ENCODE measurements at regions of chr2 and their contacts with region 1.

Region 1: GRCh38 chr2:157327621-157328500 is 2.2 kb upstream of the ERMN start:
- DNase-seq: peak; percentile 68
- ATAC-seq: peak; percentile 99
- H3K4me3 ChIP-seq: no peak overlapping the region
- H3K27ac ChIP-seq: no peak overlapping the region
- H3K4me1 ChIP-seq: no peaks in the 10 kb centered on the region
- H3K27me3 ChIP-seq: no peaks in the 10 kb centered on the region
- CTCF ChIP-seq: peak; percentile 88 to 97 (median 96)
- EP300 ChIP-seq: no peak
- POLR2A ChIP-seq: no peak
- RAD21 ChIP-seq: peak; percentile 88

Region 2: DNA sequence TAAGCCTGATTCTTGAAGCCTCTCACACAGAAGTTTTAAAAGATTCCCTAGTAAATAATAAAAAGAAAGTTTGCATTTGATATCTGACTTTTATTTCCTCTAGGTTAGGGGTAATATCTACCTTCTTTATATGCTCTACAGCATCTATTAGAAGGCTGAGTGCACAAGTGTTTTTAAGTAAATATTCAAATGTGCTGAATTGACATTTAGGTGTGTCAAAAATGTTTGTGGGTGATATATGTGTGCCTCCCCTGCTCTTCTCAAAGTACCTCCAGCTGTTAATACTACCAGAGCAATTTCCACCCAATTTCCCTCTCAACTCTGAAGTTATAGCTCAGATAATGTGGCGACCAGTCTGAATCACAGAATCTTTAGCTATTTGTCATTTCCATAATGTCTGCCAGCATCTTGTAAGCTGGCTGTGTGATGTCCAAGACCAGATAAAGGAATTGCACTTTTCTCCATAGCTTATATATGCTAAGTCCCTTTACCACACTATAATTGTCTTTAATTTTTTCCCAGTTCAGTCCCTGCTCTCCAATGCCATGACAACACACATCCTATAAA is 22.2 kb after region 1 on chr2:
- CTCF ChIA-PET with region 1: interaction called, 70 read pairs
- POLR2A ChIA-PET with region 1: no interaction called
- RAD21 ChIA-PET with region 1: interaction called, 5 read pairs
- SMC1A ChIA-PET with region 1: interaction called, 18 read pairs
- in situ Hi-C with region 1: no loop called
- intact Hi-C with region 1: no loop called
- DNase-seq: no peak
- ATAC-seq: no peak
- H3K4me3 ChIP-seq: no peak overlapping the region
- H3K27ac ChIP-seq: no peak overlapping the region
- H3K4me1 ChIP-seq: no peaks in the 10 kb centered on the region
- H3K27me3 ChIP-seq: no peaks in the 10 kb centered on the region
- CTCF ChIP-seq: no peak
- EP300 ChIP-seq: no peak
- POLR2A ChIP-seq: no peak
- RAD21 ChIP-seq: no peak

Region 3: DNA sequence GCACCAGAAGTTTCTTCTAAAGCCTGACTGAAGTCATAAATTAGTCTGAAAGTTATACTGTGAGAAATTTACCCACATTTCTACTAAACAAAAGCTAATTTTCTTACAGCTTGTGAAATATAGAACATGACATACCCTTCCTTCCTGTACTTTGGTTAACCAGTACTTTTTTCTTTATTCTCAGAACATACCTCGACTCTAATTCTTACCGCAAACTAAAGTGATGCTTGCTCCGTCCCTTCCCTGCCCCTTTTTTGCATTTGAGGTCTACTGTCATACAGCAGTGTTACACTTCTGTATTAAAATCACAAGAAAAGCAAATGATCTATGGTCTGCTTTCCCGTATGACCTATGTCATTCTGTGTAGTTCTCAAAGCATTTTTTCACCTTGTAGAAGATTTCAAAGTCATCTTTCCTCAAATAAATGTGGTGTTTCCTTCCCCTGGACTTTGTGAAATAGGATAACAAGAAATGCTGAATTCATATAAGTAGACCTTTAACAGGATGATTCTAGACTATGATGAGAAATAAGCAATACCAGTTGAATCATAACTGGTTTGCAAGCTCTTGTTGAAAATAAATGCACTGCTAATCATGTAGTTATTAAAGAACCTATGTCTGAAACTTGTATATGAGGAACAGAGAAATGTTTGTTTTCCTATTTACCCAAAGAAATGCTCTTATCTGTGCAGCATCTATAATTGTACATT is 85.6 kb after region 1 on chr2:
- CTCF ChIA-PET with region 1: interaction called, 56 read pairs
- POLR2A ChIA-PET with region 1: interaction called, 5 read pairs
- RAD21 ChIA-PET with region 1: interaction called, 26 read pairs
- SMC1A ChIA-PET with region 1: interaction called, 28 read pairs
- in situ Hi-C with region 1: loop called (anchors 5 kb)
- intact Hi-C with region 1: loop called (anchors 2 kb)
- DNase-seq: peak; percentile 97
- ATAC-seq: peak; percentile 87
- H3K4me3 ChIP-seq: no peak overlapping the region
- H3K27ac ChIP-seq: peak overlapping the region; percentile 86
- H3K4me1 ChIP-seq: peaks cover 38% of the 10 kb centered on the region
- H3K27me3 ChIP-seq: no peaks in the 10 kb centered on the region
- CTCF ChIP-seq: no peak
- EP300 ChIP-seq: peak; percentile 71 to 74; a peak in 2 of 4 replicates
- POLR2A ChIP-seq: peak; percentile 18; the same call in 1 of the 2 replicates
- RAD21 ChIP-seq: peak; percentile 37

Region 4: GRCh38 chr2:157443795-157444640 is 116.2 kb after region 1 on chr2 and contains the start of gene CYTIP:
- CTCF ChIA-PET with region 1: interaction called, 208 read pairs
- POLR2A ChIA-PET with region 1: interaction called, 7 read pairs
- RAD21 ChIA-PET with region 1: interaction called, 51 read pairs
- SMC1A ChIA-PET with region 1: interaction called, 51 read pairs
- in situ Hi-C with region 1: no loop called
- intact Hi-C with region 1: loop called (anchors 1 kb)
- DNase-seq: peak; percentile 91
- ATAC-seq: peak; percentile 57
- H3K4me3 ChIP-seq: peak within 1 kb of the TSS; percentile 90
- H3K27ac ChIP-seq: peak within 1 kb of the TSS; percentile 98
- H3K4me1 ChIP-seq: peaks cover 8% of the 10 kb centered on the region; the same call in 1 of the 2 replicates
- H3K27me3 ChIP-seq: no peaks in the 10 kb centered on the region
- CTCF ChIP-seq: no peak
- EP300 ChIP-seq: peak; percentile 52 to 67; a peak in 3 of 4 replicates
- POLR2A ChIP-seq: peak; percentile 89
- RAD21 ChIP-seq: 0 out of 2 replicates have a peak, but pooled peaks have one; percentile 21
- polyA plus RNA-seq, gene CYTIP: 71.6 to 75.4 TPM

Region 5: DNA sequence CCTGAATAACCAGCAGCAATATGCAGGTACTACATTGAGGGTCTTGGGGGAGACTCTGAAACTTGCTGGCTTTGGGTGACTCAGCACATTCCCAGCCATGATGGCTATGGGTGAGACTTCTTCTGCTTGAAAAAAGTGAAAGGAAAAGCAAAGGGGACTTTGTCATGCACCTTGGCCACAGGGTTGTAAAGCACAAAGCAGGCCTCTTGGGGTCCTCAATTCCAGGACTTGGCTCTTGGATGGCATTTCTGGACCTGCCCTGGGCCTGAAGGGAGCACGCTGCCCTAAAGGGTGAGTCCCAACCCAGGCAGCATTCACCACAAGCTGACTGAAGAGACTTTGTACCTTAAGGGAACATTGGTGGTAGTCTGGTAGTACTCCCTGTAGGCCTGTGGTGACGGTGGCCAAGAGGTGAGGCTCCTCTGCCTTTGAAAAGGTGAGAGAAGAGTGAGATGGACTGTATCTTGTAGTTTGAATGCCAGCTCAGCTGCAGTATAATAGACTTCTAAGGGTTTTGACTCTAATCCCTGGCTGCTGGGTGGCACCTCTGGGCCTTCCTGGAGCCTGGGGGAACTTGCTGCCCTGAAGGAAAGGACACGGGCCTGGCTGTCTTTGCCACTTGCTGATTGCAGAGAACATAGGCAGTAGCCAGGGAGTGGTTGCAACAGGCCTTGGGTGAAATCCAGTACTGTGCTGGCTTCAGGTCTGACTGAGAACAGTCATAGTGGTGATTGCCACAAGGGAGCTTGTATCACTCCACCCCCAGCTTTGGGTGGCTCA is 152.5 kb after region 1 on chr2:
- CTCF ChIA-PET with region 1: interaction called, 165 read pairs
- POLR2A ChIA-PET with region 1: no interaction called
- RAD21 ChIA-PET with region 1: interaction called, 7 read pairs
- SMC1A ChIA-PET with region 1: interaction called, 165 read pairs
- in situ Hi-C with region 1: no loop called
- intact Hi-C with region 1: no loop called
- DNase-seq: no peak
- ATAC-seq: peak; percentile 87
- H3K4me3 ChIP-seq: no peak overlapping the region
- H3K27ac ChIP-seq: peak overlapping the region; percentile 44
- H3K4me1 ChIP-seq: peaks cover 25% of the 10 kb centered on the region
- H3K27me3 ChIP-seq: no peaks in the 10 kb centered on the region
- CTCF ChIP-seq: no peak
- EP300 ChIP-seq: peak in 1 of 2 experiments; percentile 26; a peak in 1 of 4 replicates
- POLR2A ChIP-seq: peak; percentile 35; the same call in 1 of the 2 replicates
- RAD21 ChIP-seq: no peak

Region 6: DNA sequence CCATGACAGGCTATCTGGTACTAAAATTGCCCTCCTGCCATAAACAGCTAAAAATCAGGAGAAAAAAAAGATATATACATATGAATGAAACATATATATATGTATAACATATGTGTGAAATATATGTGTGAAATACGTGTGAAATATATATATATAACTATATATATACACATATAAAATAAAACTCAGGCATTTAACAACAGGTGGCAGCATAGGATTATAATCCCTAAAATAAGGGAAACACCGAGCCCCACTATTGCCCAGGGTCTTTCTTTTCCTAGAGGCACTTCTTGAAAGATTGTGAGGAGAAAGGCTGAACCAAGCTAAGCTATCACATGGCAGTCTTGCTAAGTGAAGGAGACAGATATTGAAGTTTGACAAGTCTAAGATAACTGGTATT is 181.9 kb after region 1 on chr2:
- CTCF ChIA-PET with region 1: interaction called, 17 read pairs
- POLR2A ChIA-PET with region 1: no interaction called
- RAD21 ChIA-PET with region 1: interaction called, 3 read pairs
- SMC1A ChIA-PET with region 1: interaction called, 6 read pairs
- in situ Hi-C with region 1: no loop called
- intact Hi-C with region 1: no loop called
- DNase-seq: no peak
- ATAC-seq: no peak
- H3K4me3 ChIP-seq: no peak overlapping the region
- H3K27ac ChIP-seq: no peak overlapping the region
- H3K4me1 ChIP-seq: no peaks in the 10 kb centered on the region
- H3K27me3 ChIP-seq: peaks cover 0 to 3% of the 10 kb centered on the region in 2 experiments; a peak in 1 of 4 replicates
- CTCF ChIP-seq: peak in 1 of 3 experiments; percentile 15; a peak in 1 of 6 replicates
- EP300 ChIP-seq: no peak
- POLR2A ChIP-seq: no peak
- RAD21 ChIP-seq: peak; percentile 34; the same call in 1 of the 2 replicates